Activated CD4-positive, alpha-beta memory T cell treated with anti-CD3 and anti-CD28 coated beads, Interleukin-2, amount 10 ng/mL, durations not matched to agents 7 days and 5 days (primary cell): ENCODE measurements at regions of chr16 and their contacts with region 1.

Region 1: GRCh38 chr16:24253192-24253591 is 2.9 kb upstream of the CACNG3 start:
- DNase-seq: peak; percentile 30
- H3K4me3 Mint-ChIP-seq: no peak overlapping the region
- H3K27ac Mint-ChIP-seq: no peak overlapping the region
- H3K4me1 Mint-ChIP-seq: no peaks in the 10 kb centered on the region
- H3K27me3 Mint-ChIP-seq: peaks cover 42% of the 10 kb centered on the region

Region 2: GRCh38 chr16:24070851-24071250 is 182.3 kb before region 1 on chr16:
- CTCF ChIA-PET with region 1: interaction called, 60 read pairs
- POLR2A ChIA-PET with region 1: interaction called, 4 read pairs
- DNase-seq: peak; percentile 44
- H3K4me3 Mint-ChIP-seq: no peak overlapping the region
- H3K27ac Mint-ChIP-seq: no peak overlapping the region
- H3K4me1 Mint-ChIP-seq: peaks cover 40% of the 10 kb centered on the region
- H3K27me3 Mint-ChIP-seq: no peaks in the 10 kb centered on the region

Region 3: GRCh38 chr16:24471561-24472350 is 218.6 kb after region 1 on chr16:
- CTCF ChIA-PET with region 1: no interaction called
- POLR2A ChIA-PET with region 1: no interaction called
- DNase-seq: no peak
- H3K4me3 Mint-ChIP-seq: no peak overlapping the region
- H3K27ac Mint-ChIP-seq: no peak overlapping the region
- H3K4me1 Mint-ChIP-seq: no peaks in the 10 kb centered on the region
- H3K27me3 Mint-ChIP-seq: peaks cover 5% of the 10 kb centered on the region